ENCODE measurements at regions of chr18 and their contacts with region 1.

Region 1: GRCh38 chr18:44679056-44679905 is 1.4 kb upstream of the SETBP1 start:
- DNase-seq: peak; percentile 92
- ATAC-seq: peak; percentile 79
- H3K4me3 ChIP-seq: peak overlapping the region in 4 of 5 experiments; percentile 64 to 88 (median 80)
- H3K4me3 Mint-ChIP-seq: peak overlapping the region; percentile 87
- H3K27ac ChIP-seq: peak overlapping the region; percentile 79 to 82
- H3K27ac Mint-ChIP-seq: peak overlapping the region; percentile 89
- H3K4me1 ChIP-seq: peaks cover 29 to 36% of the 10 kb centered on the region in 2 donors
- H3K4me1 Mint-ChIP-seq: peaks cover 7% of the 10 kb centered on the region
- H3K27me3 ChIP-seq: no peaks in the 10 kb centered on the region
- H3K27me3 Mint-ChIP-seq: no peaks in the 10 kb centered on the region
- CTCF ChIP-seq: peak; percentile 81

Region 2: DNA sequence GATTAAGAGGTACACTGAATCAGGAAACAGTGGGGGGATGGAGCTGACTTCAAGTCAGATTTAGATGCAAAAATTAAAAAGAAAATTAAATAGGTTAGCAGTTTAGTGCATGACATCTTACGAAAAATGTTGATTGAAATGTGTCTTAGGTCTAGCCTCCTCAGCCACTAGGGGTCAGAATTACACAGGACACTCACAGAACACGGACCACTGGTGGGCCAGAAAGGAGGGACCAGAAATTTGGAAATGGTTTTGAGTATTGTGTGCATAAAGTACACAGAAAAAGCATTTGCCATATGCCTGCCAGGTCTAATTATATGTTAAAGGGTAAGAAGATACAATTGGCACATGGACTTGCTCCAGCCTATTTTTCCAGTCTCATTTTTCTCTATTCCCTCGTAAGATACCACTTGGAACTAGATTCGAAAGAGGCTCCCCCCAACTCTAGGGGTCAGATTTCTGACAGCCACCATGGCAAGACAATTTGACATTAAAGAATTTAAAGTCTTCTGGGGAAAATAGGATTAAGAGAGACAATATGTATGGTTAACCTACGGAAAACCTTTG is 548.8 kb before region 1 on chr18:
- CTCF ChIA-PET with region 1: no interaction called
- POLR2A ChIA-PET with region 1: no interaction called
- intact Hi-C with region 1: loop called (anchors 5 kb)
- DNase-seq: peak; percentile 62
- ATAC-seq: no peak
- H3K4me3 ChIP-seq: no peak overlapping the region
- H3K4me3 Mint-ChIP-seq: no peak overlapping the region
- H3K27ac ChIP-seq: no peak overlapping the region
- H3K27ac Mint-ChIP-seq: no peak overlapping the region
- H3K4me1 ChIP-seq: no peaks in the 10 kb centered on the region
- H3K4me1 Mint-ChIP-seq: peaks cover 7% of the 10 kb centered on the region
- H3K27me3 ChIP-seq: no peaks in the 10 kb centered on the region
- H3K27me3 Mint-ChIP-seq: peaks cover 4% of the 10 kb centered on the region
- CTCF ChIP-seq: peak; percentile 65

Region 3: DNA sequence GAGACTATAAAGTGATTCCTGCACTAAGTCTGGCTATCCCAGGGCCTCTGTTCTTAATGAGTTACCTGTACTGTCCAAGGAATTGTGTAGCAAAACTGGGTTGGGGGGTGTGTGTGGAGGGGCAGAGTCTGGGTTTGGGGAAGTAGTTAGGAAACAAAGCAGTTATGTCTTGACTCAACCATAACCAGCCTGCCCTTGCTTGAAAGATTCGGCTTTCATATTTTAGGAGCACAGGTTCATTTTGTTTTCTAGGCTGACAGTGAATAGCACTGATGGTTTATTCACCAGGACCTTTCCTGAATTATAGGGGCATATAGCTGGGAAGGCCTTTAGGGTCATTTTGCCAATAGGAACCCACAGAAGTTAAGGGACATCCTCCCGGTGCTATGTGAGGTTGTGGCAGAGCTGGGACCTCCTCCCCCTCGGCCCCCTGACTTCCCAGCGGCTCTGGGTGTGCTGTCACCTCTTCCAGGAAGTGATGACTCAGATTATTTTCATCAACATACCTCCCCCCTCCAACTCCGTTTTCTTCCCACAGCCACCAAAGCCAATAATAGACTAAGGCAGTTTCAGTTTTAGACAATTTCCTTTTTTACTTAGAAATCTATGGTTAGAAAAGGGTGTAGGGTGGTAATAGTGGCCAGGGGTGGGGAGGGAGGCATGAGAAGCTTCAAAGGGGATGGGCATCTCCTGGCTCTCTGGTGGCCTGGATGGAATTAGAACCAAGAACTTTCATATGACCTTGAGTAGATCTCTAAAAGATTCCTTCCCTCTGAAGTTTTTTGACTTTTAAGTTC is 46.2 kb after region 1 on chr18:
- CTCF ChIA-PET with region 1: interaction called, 17 read pairs
- POLR2A ChIA-PET with region 1: interaction called, 9 read pairs
- intact Hi-C with region 1: loop called (anchors 1 kb)
- DNase-seq: peak; percentile 68
- ATAC-seq: peak; percentile 50
- H3K4me3 ChIP-seq: peak overlapping the region in 3 of 5 experiments; percentile 3 to 23 (median 7)
- H3K4me3 Mint-ChIP-seq: peak overlapping the region; percentile 70
- H3K27ac ChIP-seq: peak overlapping the region; percentile 80 to 85
- H3K27ac Mint-ChIP-seq: peak overlapping the region; percentile 88
- H3K4me1 ChIP-seq: peaks cover 99 to 100% of the 10 kb centered on the region in 2 donors
- H3K4me1 Mint-ChIP-seq: peaks cover 98% of the 10 kb centered on the region
- H3K27me3 ChIP-seq: no peaks in the 10 kb centered on the region
- H3K27me3 Mint-ChIP-seq: no peaks in the 10 kb centered on the region
- CTCF ChIP-seq: no peak

Region 4: GRCh38 chr18:44819944-44820510 is 140.7 kb after region 1 on chr18:
- CTCF ChIA-PET with region 1: interaction called, 8 read pairs
- POLR2A ChIA-PET with region 1: interaction called, 10 read pairs
- intact Hi-C with region 1: no loop called
- DNase-seq: no peak
- ATAC-seq: no peak
- H3K4me3 ChIP-seq: no peak overlapping the region
- H3K4me3 Mint-ChIP-seq: no peak overlapping the region
- H3K27ac ChIP-seq: no peak overlapping the region
- H3K27ac Mint-ChIP-seq: no peak overlapping the region
- H3K4me1 ChIP-seq: peaks cover 55 to 57% of the 10 kb centered on the region in 2 donors
- H3K4me1 Mint-ChIP-seq: peaks cover 75% of the 10 kb centered on the region
- H3K27me3 ChIP-seq: no peaks in the 10 kb centered on the region
- H3K27me3 Mint-ChIP-seq: no peaks in the 10 kb centered on the region
- CTCF ChIP-seq: no peak

Region 5: DNA sequence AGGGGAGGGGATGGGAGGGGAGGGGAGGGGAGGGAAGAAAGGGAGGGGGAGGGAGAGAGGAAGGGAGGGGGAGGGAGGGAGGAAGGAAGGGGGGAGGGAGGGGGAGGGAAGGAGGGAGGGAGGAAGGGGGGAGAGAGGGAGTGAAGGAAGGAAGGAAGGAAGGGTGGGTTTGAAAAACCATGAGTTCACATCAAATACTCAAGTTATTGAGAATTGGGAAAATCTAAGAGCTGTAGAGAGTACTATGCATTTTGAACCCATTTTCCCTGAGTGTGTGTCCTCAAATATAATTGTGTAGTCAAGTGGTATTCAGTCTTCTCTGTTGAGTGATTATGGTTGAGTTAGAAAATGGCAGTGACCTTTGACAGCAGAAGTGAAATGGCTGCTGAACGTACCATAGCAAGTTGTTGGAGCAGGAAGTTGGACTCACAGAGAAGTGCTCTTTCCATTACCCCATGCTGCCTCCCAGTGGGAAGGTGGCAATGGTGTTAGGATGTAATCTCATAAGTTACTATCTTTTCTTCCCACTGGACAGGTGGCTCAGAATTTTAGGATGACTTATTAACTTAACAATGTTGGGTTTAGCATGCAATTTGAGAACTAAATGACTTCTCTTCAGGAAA is 216.0 kb after region 1 on chr18:
- CTCF ChIA-PET with region 1: interaction called, 5 read pairs
- POLR2A ChIA-PET with region 1: no interaction called
- intact Hi-C with region 1: loop called (anchors 2 kb)
- DNase-seq: no peak
- ATAC-seq: no peak
- H3K4me3 ChIP-seq: no peak overlapping the region
- H3K4me3 Mint-ChIP-seq: no peak overlapping the region
- H3K27ac ChIP-seq: no peak overlapping the region
- H3K27ac Mint-ChIP-seq: no peak overlapping the region
- H3K4me1 ChIP-seq: peaks cover 6 to 8% of the 10 kb centered on the region in 2 donors
- H3K4me1 Mint-ChIP-seq: peaks cover 51% of the 10 kb centered on the region
- H3K27me3 ChIP-seq: no peaks in the 10 kb centered on the region
- H3K27me3 Mint-ChIP-seq: no peaks in the 10 kb centered on the region
- CTCF ChIP-seq: no peak

Region 6: DNA sequence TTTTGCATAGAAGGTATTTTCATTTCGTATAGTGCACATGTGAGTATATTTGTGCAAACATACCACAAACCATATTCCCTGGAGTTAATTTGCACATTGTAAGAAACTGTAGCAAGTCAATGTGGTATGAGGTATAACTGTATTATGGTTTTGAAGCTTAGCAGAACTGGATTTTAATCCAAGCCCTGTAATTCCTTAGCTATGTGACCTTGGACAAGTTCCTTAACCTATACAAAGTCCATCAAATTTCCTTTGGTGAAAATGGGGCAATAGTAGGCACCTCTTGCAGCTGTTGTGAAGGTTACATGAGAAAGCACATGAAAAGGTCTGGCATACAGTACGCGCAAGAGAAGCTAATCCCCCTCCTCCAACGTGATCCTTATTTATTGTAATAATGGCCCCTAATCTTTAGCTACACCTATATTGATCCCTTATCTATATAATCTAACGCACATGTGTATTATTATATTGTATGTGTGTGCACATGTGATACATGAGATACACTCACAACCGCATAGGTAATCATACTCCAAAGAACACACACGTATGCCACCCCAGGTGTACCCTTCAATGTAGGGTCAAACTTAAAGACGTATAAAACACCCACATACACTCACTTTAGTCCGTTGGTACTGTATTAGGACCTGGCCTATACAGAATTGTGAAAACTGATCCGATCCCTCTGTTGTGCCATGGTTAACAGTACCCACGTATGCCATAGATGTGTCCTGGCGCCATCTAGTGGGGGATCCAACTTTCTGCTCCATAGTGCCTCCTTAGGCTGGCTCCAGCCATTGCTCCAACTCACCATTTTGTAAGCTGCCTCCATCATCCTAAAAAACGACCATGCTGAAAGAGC is 533.1 kb after region 1 on chr18:
- CTCF ChIA-PET with region 1: interaction called, 57 read pairs
- POLR2A ChIA-PET with region 1: interaction called, 9 read pairs
- intact Hi-C with region 1: loop called (anchors 1 kb)
- DNase-seq: peak; percentile 90
- ATAC-seq: peak; percentile 99
- H3K4me3 ChIP-seq: no peak overlapping the region
- H3K4me3 Mint-ChIP-seq: no peak overlapping the region
- H3K27ac ChIP-seq: no peak overlapping the region
- H3K27ac Mint-ChIP-seq: no peak overlapping the region
- H3K4me1 ChIP-seq: peaks cover 0 to 6% of the 10 kb centered on the region in 2 donors
- H3K4me1 Mint-ChIP-seq: peaks cover 7% of the 10 kb centered on the region
- H3K27me3 ChIP-seq: no peaks in the 10 kb centered on the region
- H3K27me3 Mint-ChIP-seq: no peaks in the 10 kb centered on the region
- CTCF ChIP-seq: peak; percentile 100